Activated CD4-positive, alpha-beta T cell treated with anti-CD3 and anti-CD28 coated beads, Interleukin-2, amount 10 ng/mL, durations not matched to agents 7 days and 5 days (primary cell): ENCODE measurements at regions of chr2 and their contacts with region 1.

Region 1: GRCh38 chr2:96174251-96175144 is 29.3 kb upstream of the DUSP2 start:
- DNase-seq: peak; percentile 85
- H3K4me3 Mint-ChIP-seq: no peak overlapping the region
- H3K27ac Mint-ChIP-seq: no peak overlapping the region
- H3K4me1 Mint-ChIP-seq: peaks cover 13% of the 10 kb centered on the region
- H3K27me3 Mint-ChIP-seq: no peaks in the 10 kb centered on the region

Region 2: GRCh38 chr2:96131813-96132745 is 42.4 kb before region 1 on chr2:
- CTCF ChIA-PET with region 1: interaction called, 239 read pairs
- POLR2A ChIA-PET with region 1: no interaction called
- DNase-seq: no peak
- H3K4me3 Mint-ChIP-seq: no peak overlapping the region
- H3K27ac Mint-ChIP-seq: peak overlapping the region; percentile 47
- H3K4me1 Mint-ChIP-seq: peaks cover 21% of the 10 kb centered on the region
- H3K27me3 Mint-ChIP-seq: no peaks in the 10 kb centered on the region

Region 3: DNA sequence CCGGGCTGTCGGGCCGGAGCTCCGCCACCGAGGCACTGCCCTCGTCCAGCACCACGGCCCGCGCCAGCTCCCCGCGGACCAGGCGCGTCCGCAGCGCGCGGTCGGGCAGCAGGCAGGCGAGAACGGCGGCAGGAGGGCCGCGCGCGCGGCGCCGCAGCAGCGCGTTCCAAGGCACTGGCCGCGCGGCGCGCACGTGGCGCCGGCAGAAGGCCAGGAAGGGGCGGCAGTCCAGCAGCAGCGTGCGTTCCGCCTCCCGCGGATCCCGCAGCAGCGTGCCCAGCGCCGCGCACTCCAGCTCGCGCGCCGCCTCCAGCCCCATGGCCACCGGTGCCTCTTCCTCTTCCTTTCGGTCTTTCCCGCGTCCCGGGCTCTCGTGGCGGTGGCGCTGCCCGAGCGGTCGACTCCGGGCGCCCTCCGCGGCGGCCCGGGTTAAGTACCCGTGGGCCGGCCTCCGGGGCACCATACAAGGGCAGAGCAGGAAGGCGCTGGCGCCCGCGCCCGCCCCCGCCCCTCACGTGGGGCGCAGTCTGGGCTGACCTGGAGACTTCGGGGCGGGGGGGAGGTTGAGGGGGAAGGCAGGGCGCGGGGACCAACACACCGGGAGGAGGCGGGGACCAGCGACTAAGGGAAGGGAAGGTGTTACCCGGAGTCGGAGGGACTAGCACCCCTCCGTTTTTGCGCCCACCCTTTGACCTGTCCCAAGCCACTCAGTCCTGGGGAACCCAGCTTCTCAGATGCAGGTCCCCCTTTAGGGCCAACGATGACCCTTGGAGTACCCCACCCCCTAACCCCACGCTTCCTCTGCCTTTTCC is 29.3 kb before region 1 on chr2 and contains the start of gene DUSP2:
- CTCF ChIA-PET with region 1: interaction called, 239 read pairs
- POLR2A ChIA-PET with region 1: interaction called, 17 read pairs
- DNase-seq: peak; percentile 88
- H3K4me3 Mint-ChIP-seq: peak within 1 kb of the TSS; percentile 92
- H3K27ac Mint-ChIP-seq: peak within 1 kb of the TSS; percentile 98
- H3K4me1 Mint-ChIP-seq: peaks cover 67% of the 10 kb centered on the region
- H3K27me3 Mint-ChIP-seq: no peaks in the 10 kb centered on the region
- total RNA-seq, gene DUSP2: 11.9 to 14.2 TPM

Region 4: GRCh38 chr2:96186562-96186961 is 12.1 kb after region 1 on chr2:
- CTCF ChIA-PET with region 1: interaction called, 17 read pairs
- POLR2A ChIA-PET with region 1: no interaction called
- DNase-seq: no peak
- H3K4me3 Mint-ChIP-seq: no peak overlapping the region
- H3K27ac Mint-ChIP-seq: no peak overlapping the region
- H3K4me1 Mint-ChIP-seq: no peaks in the 10 kb centered on the region
- H3K27me3 Mint-ChIP-seq: no peaks in the 10 kb centered on the region

Region 5: DNA sequence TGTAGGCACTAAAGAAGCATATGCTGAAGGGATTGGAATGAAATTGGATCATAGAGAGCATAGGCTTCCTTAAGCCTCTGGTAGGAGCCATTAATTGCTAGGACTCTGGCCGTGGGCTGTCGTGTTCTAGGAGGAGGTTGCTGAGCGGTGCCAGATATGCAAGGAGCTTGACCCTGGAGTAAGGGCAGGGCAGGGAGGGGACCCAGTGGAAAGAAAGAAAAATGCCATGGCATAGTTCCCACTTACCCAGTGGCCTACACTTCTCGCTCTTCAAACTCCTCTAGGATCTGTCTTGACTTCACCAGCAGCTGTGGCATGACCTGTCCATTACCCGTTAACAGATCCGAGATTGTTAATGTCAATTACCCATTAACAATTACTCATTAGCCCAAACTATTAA is 277.6 kb after region 1 on chr2:
- CTCF ChIA-PET with region 1: no interaction called
- POLR2A ChIA-PET with region 1: no interaction called
- DNase-seq: no peak
- H3K4me3 Mint-ChIP-seq: no peak overlapping the region
- H3K27ac Mint-ChIP-seq: no peak overlapping the region
- H3K4me1 Mint-ChIP-seq: no peaks in the 10 kb centered on the region
- H3K27me3 Mint-ChIP-seq: no peaks in the 10 kb centered on the region